CD8-positive, alpha-beta T cell (primary cell): ENCODE measurements at regions of chr15 and their contacts with region 1.

Region 1: GRCh38 chr15:60423537-60423936 is 25.8 kb upstream of the ANXA2 start:
- DNase-seq: no peak
- ATAC-seq: no peak
- H3K4me3 ChIP-seq: no peak overlapping the region
- H3K4me3 Mint-ChIP-seq: no peak overlapping the region
- H3K27ac ChIP-seq: no peak overlapping the region
- H3K27ac Mint-ChIP-seq: peak overlapping the region; percentile 15
- H3K4me1 ChIP-seq: no peaks in the 10 kb centered on the region
- H3K4me1 Mint-ChIP-seq: no peaks in the 10 kb centered on the region
- H3K27me3 ChIP-seq: no peaks in the 10 kb centered on the region
- H3K27me3 Mint-ChIP-seq: no peaks in the 10 kb centered on the region
- CTCF ChIP-seq: no peak

Region 2: DNA sequence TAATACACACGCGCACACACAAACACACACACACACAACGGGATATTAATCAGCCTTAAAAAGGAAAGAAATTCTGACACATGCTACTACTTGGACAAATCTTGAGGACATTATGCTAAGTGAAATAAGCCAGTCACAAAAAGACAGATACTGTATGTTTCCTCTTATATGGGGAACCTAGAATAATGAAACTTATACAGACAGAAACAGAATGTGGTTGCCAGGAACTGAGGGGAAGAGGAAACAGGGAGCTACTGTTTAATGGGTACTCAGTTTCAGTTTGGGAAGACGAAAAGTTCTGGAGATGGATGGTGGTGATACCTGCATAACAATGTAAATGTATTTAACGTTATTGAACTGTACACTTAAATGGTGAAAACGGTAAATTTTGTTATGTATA is 35.2 kb after region 1 on chr15:
- CTCF ChIA-PET with region 1: no interaction called
- POLR2A ChIA-PET with region 1: no interaction called
- intact Hi-C with region 1: loop called in 1 of 2 experiments (anchors 5 kb)
- DNase-seq: no peak
- ATAC-seq: no peak
- H3K4me3 ChIP-seq: no peak overlapping the region
- H3K4me3 Mint-ChIP-seq: no peak overlapping the region
- H3K27ac ChIP-seq: no peak overlapping the region
- H3K27ac Mint-ChIP-seq: no peak overlapping the region
- H3K4me1 ChIP-seq: no peaks in the 10 kb centered on the region
- H3K4me1 Mint-ChIP-seq: peaks cover 1% of the 10 kb centered on the region
- H3K27me3 ChIP-seq: no peaks in the 10 kb centered on the region
- H3K27me3 Mint-ChIP-seq: no peaks in the 10 kb centered on the region
- CTCF ChIP-seq: no peak